ENCODE measurements at regions of chr6 and their contacts with region 1.

Region 1: DNA sequence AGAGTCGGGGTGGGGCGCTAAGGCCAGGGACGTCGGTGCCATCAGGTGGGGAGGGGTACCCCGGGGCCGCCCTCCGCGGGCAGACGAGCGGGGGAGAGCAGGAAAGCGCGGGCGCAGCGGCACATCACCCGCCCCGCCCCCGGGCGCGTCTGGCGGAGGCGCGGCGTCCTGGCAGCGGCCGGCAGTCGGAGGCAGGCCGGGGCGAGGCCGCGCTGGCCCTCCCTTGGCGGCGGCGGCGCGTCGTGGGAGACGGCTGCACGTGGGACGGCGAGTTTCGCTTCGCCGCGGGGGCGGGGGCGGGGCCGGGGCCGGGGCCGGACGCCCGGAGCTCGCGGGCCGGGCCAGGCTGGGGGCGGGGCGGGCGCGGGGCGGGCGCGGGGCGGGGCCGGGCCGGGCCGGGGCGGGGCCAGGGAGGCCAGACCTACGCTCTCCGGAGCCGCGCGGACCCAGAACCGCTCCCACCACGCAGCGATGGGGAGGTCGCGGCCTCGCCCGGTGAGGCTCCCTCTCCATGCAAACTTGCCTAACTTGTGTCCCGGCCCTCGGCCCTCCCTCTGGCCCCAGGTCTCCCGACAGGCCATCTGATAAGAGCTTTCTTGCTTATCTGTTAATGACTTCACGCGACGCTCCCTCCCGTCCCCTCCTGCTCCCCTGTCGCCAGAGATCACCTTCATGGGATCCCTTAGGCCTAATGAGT is 12.5 kb downstream of the ITPR3 start:
- DNase-seq: peak; percentile 66
- ATAC-seq: peak; percentile 85
- H3K4me3 Mint-ChIP-seq: peak overlapping the region; percentile 73
- H3K27ac Mint-ChIP-seq: peak overlapping the region; percentile 46
- H3K4me1 Mint-ChIP-seq: peaks cover 61% of the 10 kb centered on the region
- H3K27me3 Mint-ChIP-seq: no peaks in the 10 kb centered on the region

Region 2: GRCh38 chr6:33543116-33543515 is 90.5 kb before region 1 on chr6:
- CTCF ChIA-PET with region 1: no interaction called
- POLR2A ChIA-PET with region 1: no interaction called
- DNase-seq: no peak
- ATAC-seq: no peak
- H3K4me3 Mint-ChIP-seq: no peak overlapping the region
- H3K27ac Mint-ChIP-seq: no peak overlapping the region
- H3K4me1 Mint-ChIP-seq: peaks cover 14% of the 10 kb centered on the region
- H3K27me3 Mint-ChIP-seq: no peaks in the 10 kb centered on the region

Region 3: GRCh38 chr6:33620856-33621710 is 12.5 kb before region 1 on chr6 and contains the start of gene ITPR3:
- CTCF ChIA-PET with region 1: interaction called, 32 read pairs
- POLR2A ChIA-PET with region 1: interaction called, 7 read pairs
- DNase-seq: peak; percentile 85
- ATAC-seq: peak; percentile 82
- H3K4me3 Mint-ChIP-seq: peak within 1 kb of the TSS; percentile 96
- H3K27ac Mint-ChIP-seq: peak within 1 kb of the TSS; percentile 95
- H3K4me1 Mint-ChIP-seq: peaks cover 60% of the 10 kb centered on the region
- H3K27me3 Mint-ChIP-seq: no peaks in the 10 kb centered on the region
- total RNA-seq, gene ITPR3: 57.8 to 59.3 TPM

Region 4: DNA sequence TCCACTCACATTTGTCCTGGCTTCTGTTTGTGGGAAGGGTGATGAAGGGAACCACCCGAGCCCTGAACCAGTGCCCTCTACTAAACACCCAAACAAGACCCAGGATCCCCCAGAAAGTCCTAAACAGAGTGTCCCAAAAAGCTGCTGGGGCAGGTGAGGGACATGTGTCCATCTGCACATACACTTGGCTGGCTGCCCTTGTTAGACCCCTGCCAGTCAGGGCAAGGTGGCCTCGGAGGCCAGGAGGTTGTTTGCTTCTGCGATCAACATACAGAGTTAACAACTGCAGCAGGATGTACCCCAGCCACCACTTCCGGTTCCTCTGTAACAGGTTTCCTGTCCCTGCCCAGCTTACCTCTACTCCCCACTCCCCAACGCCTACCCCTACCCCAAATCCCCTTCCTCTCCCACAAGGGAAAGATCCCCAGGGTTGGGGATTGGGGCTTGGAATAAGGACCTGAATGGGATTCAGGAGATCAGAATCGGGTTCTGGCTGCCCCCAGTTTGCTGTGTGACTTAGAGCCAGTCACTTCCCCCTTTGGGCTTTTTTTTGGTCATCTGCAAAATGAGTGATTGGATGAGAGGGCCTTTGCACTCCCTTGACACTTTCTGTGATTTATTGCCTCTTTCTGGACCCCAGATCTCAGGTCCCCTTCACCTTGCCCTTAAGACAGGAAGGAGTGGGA is 1677.9 kb after region 1 on chr6:
- CTCF ChIA-PET with region 1: no interaction called
- POLR2A ChIA-PET with region 1: no interaction called
- DNase-seq: peak; percentile 78
- ATAC-seq: peak; percentile 88
- H3K4me3 Mint-ChIP-seq: peak overlapping the region; percentile 65
- H3K27ac Mint-ChIP-seq: peak overlapping the region; percentile 96
- H3K4me1 Mint-ChIP-seq: peaks cover 86% of the 10 kb centered on the region
- H3K27me3 Mint-ChIP-seq: no peaks in the 10 kb centered on the region